ENCODE measurements at regions of chr11 and their contacts with region 1.

Region 1: GRCh38 chr11:118171269-118172062 is 5.0 kb downstream of the SCN2B start:
- DNase-seq: peak; percentile 37
- H3K4me3 ChIP-seq: no peak overlapping the region
- H3K27ac ChIP-seq: no peak overlapping the region
- H3K4me1 ChIP-seq: peaks cover 23% of the 10 kb centered on the region
- H3K27me3 ChIP-seq: no peaks in the 10 kb centered on the region
- CTCF ChIP-seq: peak; percentile 64 to 91

Region 2: GRCh38 chr11:117907251-117907981 is 264.1 kb before region 1 on chr11:
- CTCF ChIA-PET with region 1: no interaction called
- dilution Hi-C with region 1: no loop called
- in situ Hi-C with region 1: no loop called
- intact Hi-C with region 1: no loop called
- DNase-seq: peak; percentile 96
- H3K4me3 ChIP-seq: peak overlapping the region; percentile 2 to 28 (median 19)
- H3K27ac ChIP-seq: peak overlapping the region; percentile 64
- H3K4me1 ChIP-seq: peaks cover 9% of the 10 kb centered on the region
- H3K27me3 ChIP-seq: no peaks in the 10 kb centered on the region
- CTCF ChIP-seq: no peak

Region 3: GRCh38 chr11:118152552-118153471 is 18.7 kb before region 1 on chr11 and contains the start of gene SCN4B:
- CTCF ChIA-PET with region 1: interaction called, 6 read pairs
- dilution Hi-C with region 1: no loop called
- in situ Hi-C with region 1: no loop called
- intact Hi-C with region 1: loop called (anchors 1 kb)
- DNase-seq: peak; percentile 61
- H3K4me3 ChIP-seq: peak within 1 kb of the TSS; percentile 42 to 69 (median 55)
- H3K27ac ChIP-seq: no peak within 1 kb of the TSS
- H3K4me1 ChIP-seq: peaks cover 23% of the 10 kb centered on the region
- H3K27me3 ChIP-seq: no peaks in the 10 kb centered on the region
- CTCF ChIP-seq: no peak
- total RNA-seq, gene SCN4B: 6.5 to 11.5 TPM